GM12878 (cell line): ENCODE measurements at regions of chr3 and their contacts with region 1.

Region 1: GRCh38 chr3:125398954-125399353 is 23.8 kb upstream of the ZNF148 start:
- DNase-seq: no peak
- ATAC-seq: 0 out of 3 replicates have a peak, but pooled peaks have one; percentile 41
- H3K4me3 ChIP-seq: no peak overlapping the region
- H3K27ac ChIP-seq: no peak overlapping the region
- H3K4me1 ChIP-seq: no peaks in the 10 kb centered on the region
- H3K27me3 ChIP-seq: no peaks in the 10 kb centered on the region
- CTCF ChIP-seq: peak in 2 of 3 experiments; percentile 22 to 34; a peak in 4 of 6 replicates
- EP300 ChIP-seq: no peak
- POLR2A ChIP-seq: no peak
- RAD21 ChIP-seq: peak; percentile 29; the same call in 1 of the 2 replicates

Region 2: GRCh38 chr3:125437631-125438435 is 38.9 kb after region 1 on chr3:
- CTCF ChIA-PET with region 1: interaction called, 8 read pairs
- POLR2A ChIA-PET with region 1: interaction called, 4 read pairs
- RAD21 ChIA-PET with region 1: interaction called, 4 read pairs
- SMC1A ChIA-PET with region 1: interaction called, 12 read pairs
- in situ Hi-C with region 1: no loop called
- intact Hi-C with region 1: loop called (anchors 1 kb)
- DNase-seq: no peak
- ATAC-seq: peak; percentile 45
- H3K4me3 ChIP-seq: no peak overlapping the region
- H3K27ac ChIP-seq: no peak overlapping the region
- H3K4me1 ChIP-seq: peaks cover 19% of the 10 kb centered on the region
- H3K27me3 ChIP-seq: no peaks in the 10 kb centered on the region
- CTCF ChIP-seq: peak; percentile 92 to 96 (median 92)
- EP300 ChIP-seq: no peak
- POLR2A ChIP-seq: no peak
- RAD21 ChIP-seq: peak; percentile 97

Region 3: GRCh38 chr3:125624341-125624740 is 225.4 kb after region 1 on chr3:
- CTCF ChIA-PET with region 1: no interaction called
- POLR2A ChIA-PET with region 1: no interaction called
- RAD21 ChIA-PET with region 1: no interaction called
- SMC1A ChIA-PET with region 1: no interaction called
- in situ Hi-C with region 1: no loop called
- intact Hi-C with region 1: no loop called
- DNase-seq: no peak
- ATAC-seq: no peak
- H3K4me3 ChIP-seq: no peak overlapping the region
- H3K27ac ChIP-seq: no peak overlapping the region
- H3K4me1 ChIP-seq: no peaks in the 10 kb centered on the region
- H3K27me3 ChIP-seq: no peaks in the 10 kb centered on the region
- CTCF ChIP-seq: no peak
- EP300 ChIP-seq: no peak
- POLR2A ChIP-seq: no peak
- RAD21 ChIP-seq: no peak